Activated CD4-positive, alpha-beta memory T cell treated with anti-CD3 and anti-CD28 coated beads, Interleukin-2, amount 10 ng/mL, durations not matched to agents 7 days and 5 days (primary cell): ENCODE measurements at regions of chr1 and their contacts with region 1.

Region 1: DNA sequence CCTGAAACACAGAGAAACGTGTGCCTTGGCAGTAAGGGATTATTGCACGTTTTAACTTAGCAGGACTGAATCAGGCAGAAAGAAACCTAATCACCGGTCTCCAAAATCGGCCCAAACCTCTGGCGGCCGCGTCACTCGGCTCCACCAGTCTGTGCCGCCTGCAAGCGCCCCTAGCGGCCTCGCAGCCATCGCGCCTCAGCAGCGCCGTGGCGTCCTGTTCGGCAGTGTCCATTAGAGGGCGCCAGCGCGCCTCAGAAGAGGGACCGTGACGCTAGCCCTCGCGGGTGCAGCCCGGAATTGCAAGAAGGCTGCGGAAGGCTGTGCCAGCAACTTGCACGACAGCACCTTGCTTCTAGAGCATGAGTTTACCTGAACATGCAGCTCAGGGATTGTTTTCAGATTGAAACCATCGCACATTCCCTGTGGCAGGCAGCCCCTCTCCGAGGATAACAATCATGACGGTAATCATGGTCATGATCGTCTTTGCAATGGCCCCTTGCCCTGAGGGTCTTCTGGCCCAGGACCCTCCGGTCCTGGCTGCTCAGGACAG is 164.4 kb downstream of the TRIM33 start:
- DNase-seq: peak; percentile 99
- H3K4me3 Mint-ChIP-seq: peak overlapping the region; percentile 78
- H3K27ac Mint-ChIP-seq: peak overlapping the region; percentile 94
- H3K4me1 Mint-ChIP-seq: peaks cover 48% of the 10 kb centered on the region
- H3K27me3 Mint-ChIP-seq: no peaks in the 10 kb centered on the region

Region 2: GRCh38 chr1:114282751-114283403 is 63.7 kb before region 1 on chr1:
- CTCF ChIA-PET with region 1: interaction called, 14 read pairs
- POLR2A ChIA-PET with region 1: interaction called, 4 read pairs
- DNase-seq: peak; percentile 88
- H3K4me3 Mint-ChIP-seq: no peak overlapping the region
- H3K27ac Mint-ChIP-seq: no peak overlapping the region
- H3K4me1 Mint-ChIP-seq: peaks cover 3% of the 10 kb centered on the region
- H3K27me3 Mint-ChIP-seq: peaks cover 3% of the 10 kb centered on the region

Region 3: GRCh38 chr1:114336360-114336759 is 10.2 kb before region 1 on chr1:
- CTCF ChIA-PET with region 1: interaction called, 32 read pairs
- POLR2A ChIA-PET with region 1: interaction called, 23 read pairs
- DNase-seq: no peak
- H3K4me3 Mint-ChIP-seq: no peak overlapping the region
- H3K27ac Mint-ChIP-seq: no peak overlapping the region
- H3K4me1 Mint-ChIP-seq: peaks cover 71% of the 10 kb centered on the region
- H3K27me3 Mint-ChIP-seq: no peaks in the 10 kb centered on the region

Region 4: DNA sequence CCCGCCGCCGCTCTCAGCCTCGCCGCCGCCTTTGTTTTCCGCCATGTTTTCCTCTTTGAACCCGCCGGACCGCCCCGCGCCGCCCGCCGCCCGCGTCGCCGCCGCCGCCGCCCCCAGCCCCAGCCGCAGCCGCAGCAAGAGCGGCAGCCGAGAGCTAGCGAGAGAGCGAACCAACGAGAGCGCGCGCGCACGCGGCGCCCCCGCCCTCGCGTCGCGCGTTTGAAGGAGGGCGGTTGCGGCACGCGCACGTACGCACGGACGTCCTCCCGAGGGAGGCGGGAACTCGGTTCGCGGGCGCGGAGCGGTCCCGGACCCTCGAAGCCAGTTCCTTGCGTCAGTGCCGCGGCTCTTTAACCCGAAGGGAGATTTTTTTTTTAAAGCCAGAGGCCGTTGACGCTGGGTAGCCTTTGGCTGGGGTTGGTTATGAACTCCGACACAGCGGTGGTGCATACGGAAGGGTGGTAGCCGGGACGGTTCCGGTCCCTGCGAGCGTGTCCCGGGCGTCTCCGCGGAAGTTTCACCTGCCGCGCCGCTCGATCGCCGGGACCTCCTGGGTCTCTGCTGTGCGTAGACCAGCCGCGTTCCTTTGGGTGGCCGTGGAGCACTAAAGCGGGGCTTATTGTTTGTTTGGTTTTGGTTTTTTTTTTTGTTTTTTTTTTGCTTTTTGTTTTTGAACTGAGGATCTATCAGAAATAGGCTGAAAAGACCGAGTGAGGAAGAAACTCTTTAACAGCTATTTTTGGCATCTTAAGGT is 164.7 kb after region 1 on chr1 and contains the start of gene TRIM33:
- CTCF ChIA-PET with region 1: interaction called, 4 read pairs
- POLR2A ChIA-PET with region 1: interaction called, 31 read pairs
- DNase-seq: peak; percentile 92
- H3K4me3 Mint-ChIP-seq: peak within 1 kb of the TSS; percentile 93
- H3K27ac Mint-ChIP-seq: peak within 1 kb of the TSS; percentile 98
- H3K4me1 Mint-ChIP-seq: peaks cover 47% of the 10 kb centered on the region
- H3K27me3 Mint-ChIP-seq: no peaks in the 10 kb centered on the region
- total RNA-seq, gene TRIM33: 36.0 to 36.5 TPM